Breast epithelium (tissue), 4 donors: ENCODE measurements at regions of chr15 and their contacts with region 1.

Region 1: DNA sequence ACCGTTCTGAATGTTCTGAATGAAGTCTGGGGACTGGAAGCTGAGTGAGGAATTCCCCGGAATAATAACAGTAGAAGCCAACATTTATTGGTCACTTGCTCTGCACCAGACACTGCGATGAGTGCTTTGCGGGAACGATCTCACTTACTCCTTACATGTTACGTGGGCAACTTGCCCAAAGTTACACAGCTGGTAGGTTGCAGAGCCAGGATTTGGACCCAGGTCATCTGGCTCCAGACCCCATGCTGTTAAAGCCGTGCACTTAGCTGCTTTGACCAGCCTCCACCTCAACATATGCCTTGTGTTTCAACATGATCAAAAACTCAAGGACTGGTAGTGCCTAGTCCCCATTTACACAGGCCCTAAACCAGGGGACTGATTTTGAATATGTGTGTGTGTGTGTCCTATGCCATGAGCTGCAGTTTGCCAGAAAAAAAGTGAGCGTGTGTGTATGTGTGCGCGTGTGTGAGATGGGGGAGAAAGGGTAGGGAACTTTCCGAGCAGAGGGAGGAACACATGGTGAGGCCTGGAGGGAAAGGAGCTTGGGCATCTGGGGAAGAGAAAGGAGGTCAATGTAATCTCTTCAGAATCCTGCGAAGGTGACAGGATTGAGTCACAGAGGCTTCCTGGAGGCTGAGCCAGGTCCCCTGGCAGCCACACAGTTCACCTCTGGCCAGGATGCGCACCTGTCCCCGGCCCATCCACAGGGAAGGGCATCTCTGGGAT is 28.9 kb downstream of the LINGO1 start:
- DNase-seq: no peak
- H3K4me3 ChIP-seq: no peak overlapping the region
- H3K27ac ChIP-seq: no peak overlapping the region
- H3K4me1 ChIP-seq: no peaks in the 10 kb centered on the region
- H3K27me3 ChIP-seq: no peaks in the 10 kb centered on the region
- CTCF ChIP-seq: no peak
- POLR2A ChIP-seq: no peak

Region 2: GRCh38 chr15:77573802-77574201 is 30.0 kb before region 1 on chr15:
- intact Hi-C with region 1: loop called (anchors 1 kb)
- DNase-seq: no peak
- H3K4me3 ChIP-seq: no peak overlapping the region
- H3K27ac ChIP-seq: no peak overlapping the region
- H3K4me1 ChIP-seq: peaks cover 0 to 7% of the 10 kb centered on the region in 2 donors
- H3K27me3 ChIP-seq: no peaks in the 10 kb centered on the region
- CTCF ChIP-seq: no peak
- POLR2A ChIP-seq: no peak